Pancreas (tissue), 10 donors: ENCODE measurements at regions of chr10 and their contacts with region 1.

Region 1: GRCh38 chr10:123582084-123582989 is 83.8 kb upstream of the GPR26 start:
- DNase-seq: peak; percentile 48 to 88 (median 74)
- ATAC-seq: peak; percentile 54 to 84 (median 82)
- H3K4me3 ChIP-seq: no peak overlapping the region
- H3K27ac ChIP-seq: no peak overlapping the region
- H3K4me1 ChIP-seq: peaks cover 0 to 5% (median 0%) of the 10 kb centered on the region in 3 donors
- H3K27me3 ChIP-seq: peaks cover 0 to 21% (median 0%) of the 10 kb centered on the region in 4 donors
- CTCF ChIP-seq: peak; percentile 63 to 80 (median 72)

Region 2: GRCh38 chr10:123512901-123513775 is 69.2 kb before region 1 on chr10:
- intact Hi-C with region 1: no loop called
- DNase-seq: no peak
- ATAC-seq: peak in 2 of 4 donors; percentile 48 to 56
- H3K4me3 ChIP-seq: no peak overlapping the region
- H3K27ac ChIP-seq: no peak overlapping the region
- H3K4me1 ChIP-seq: no peaks in the 10 kb centered on the region
- H3K27me3 ChIP-seq: no peaks in the 10 kb centered on the region
- CTCF ChIP-seq: no peak

Region 3: DNA sequence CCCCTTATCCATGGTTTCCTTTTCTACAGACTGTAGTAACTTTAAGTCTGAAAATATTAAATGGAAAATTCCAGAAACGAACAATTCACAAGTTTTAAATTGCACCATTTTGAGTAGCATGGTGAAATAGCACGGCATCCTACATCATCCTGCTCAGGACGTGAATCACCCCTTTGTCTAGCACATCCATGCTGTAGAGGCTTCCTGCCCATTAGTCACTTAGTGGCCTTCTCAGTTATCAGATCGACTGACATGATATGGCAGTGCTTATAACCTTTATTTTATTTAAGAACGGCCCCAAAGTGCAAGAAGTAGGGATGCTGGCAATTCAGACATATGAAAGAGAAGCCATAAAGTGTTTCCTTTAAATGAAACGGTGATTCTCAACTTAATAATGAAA is 226.6 kb after region 1 on chr10:
- intact Hi-C with region 1: no loop called
- DNase-seq: no peak
- ATAC-seq: no peak
- H3K4me3 ChIP-seq: no peak overlapping the region
- H3K27ac ChIP-seq: no peak overlapping the region
- H3K4me1 ChIP-seq: no peaks in the 10 kb centered on the region
- H3K27me3 ChIP-seq: peaks cover 0 to 18% (median 2%) of the 10 kb centered on the region in 4 donors
- CTCF ChIP-seq: no peak

Region 4: DNA sequence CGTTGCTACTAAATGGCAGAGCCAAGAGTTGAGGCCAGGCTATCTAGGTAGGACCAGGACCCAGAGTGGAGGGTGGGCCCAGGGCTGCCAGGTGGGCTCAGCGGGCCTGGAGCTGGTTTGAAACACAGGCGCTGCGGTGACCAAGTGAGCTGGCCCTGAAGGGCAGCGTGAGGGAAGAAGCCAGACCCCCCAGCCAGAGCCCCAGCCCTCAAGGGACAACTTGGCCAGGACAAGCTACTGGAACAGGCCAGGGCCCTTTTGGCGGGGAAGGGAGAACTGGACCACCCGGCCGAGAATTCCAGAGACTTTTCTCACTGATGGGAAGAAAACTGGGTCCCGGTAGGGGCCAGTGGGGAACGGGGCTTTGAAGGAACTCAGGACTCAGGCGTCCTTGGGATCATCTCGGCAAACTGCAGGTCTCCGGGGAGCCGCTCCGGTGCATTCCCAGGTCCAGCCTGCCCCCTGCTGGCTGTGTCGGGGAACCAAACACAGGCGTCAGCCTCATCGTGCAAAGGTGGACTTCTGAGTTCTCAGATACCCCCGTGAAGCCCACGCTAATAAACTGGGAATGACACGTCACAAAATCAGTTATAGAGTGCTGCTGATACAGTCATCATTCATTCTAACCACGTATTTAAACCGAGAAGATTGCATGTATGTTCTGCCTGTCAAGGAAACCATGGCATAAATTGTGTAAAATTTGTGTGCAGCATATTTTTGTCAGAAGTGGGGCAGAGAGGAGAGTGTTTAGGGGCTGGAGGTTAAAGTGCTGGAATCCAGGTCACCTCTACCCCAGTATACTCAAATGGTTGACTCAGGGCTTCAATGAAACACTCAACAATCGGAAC is 385.3 kb after region 1 on chr10:
- intact Hi-C with region 1: loop called (anchors 5 to 10 kb)
- DNase-seq: peak; percentile 29 to 89 (median 65)
- ATAC-seq: peak; percentile 38 to 88 (median 87)
- H3K4me3 ChIP-seq: no peak overlapping the region
- H3K27ac ChIP-seq: no peak overlapping the region
- H3K4me1 ChIP-seq: no peaks in the 10 kb centered on the region
- H3K27me3 ChIP-seq: peaks cover 0 to 14% (median 4%) of the 10 kb centered on the region in 4 donors
- CTCF ChIP-seq: peak; percentile 70 to 85 (median 77)

Region 5: DNA sequence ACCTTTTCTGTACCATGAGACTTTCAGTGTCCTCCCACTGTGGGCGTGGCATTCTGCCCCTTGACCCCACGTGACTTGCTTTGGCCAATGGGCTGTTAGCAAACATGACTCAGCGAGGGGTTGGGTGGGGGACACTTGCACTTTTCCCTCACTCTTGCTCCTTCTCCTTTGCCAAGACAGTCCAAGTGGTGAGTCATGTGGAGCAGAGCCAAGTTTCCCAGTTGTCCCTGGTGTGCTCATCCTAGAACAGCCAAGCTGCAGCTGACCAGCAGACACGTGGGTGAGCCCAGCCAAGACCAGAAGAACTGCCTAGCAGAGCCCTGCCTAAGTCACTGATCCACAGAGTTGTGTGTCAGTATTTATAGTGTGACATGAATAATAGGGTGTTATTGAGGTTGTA is 392.1 kb after region 1 on chr10:
- intact Hi-C with region 1: loop called (anchors 5 to 10 kb)
- DNase-seq: no peak
- ATAC-seq: no peak
- H3K4me3 ChIP-seq: no peak overlapping the region
- H3K27ac ChIP-seq: no peak overlapping the region
- H3K4me1 ChIP-seq: no peaks in the 10 kb centered on the region
- H3K27me3 ChIP-seq: peaks cover 0 to 33% (median 10%) of the 10 kb centered on the region in 4 donors
- CTCF ChIP-seq: no peak